Activated naive CD8-positive, alpha-beta T cell treated with anti-CD3 and anti-CD28 coated beads, Interleukin-2, amount 10 ng/mL, durations not matched to agents 7 days and 5 days (primary cell): ENCODE measurements at regions of chr12 and their contacts with region 1.

Region 1: DNA sequence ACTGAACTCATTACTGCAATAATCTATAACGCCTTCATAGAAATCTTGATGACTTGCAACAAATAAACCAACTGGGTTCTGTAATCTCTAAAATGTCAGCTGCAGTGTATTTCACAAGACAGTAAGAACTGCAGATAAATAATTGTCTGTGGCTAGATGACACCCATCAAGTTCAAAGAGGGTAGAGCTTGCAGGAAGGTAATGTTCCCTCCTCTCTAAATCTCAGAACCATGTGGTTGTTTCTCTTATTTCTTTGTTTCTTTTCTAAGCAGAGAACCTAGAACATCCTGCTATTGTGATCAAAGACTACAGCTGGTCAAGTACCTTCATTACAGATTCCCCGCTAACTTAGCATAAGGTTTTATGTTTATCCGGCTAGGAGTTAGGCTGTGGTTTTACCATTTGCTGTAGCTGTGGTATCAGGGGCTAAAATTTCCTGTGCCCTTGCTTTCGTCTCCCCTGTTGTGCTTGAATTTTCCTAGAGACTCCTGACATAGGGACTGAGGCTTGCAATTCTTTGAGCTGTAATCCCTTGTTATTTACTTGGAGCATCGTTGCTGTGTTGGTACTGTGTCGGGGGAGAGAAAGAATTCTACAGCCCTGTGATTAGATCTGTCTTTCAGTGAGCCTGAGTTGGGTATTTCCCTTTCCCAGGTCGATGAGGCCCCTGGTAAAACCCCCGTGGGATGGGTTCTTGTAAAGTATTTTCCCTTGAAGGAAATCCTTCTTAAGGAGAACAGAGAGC is 253.1 kb upstream of the BTG1 start:
- DNase-seq: no peak
- ATAC-seq: peak; percentile 90
- H3K4me3 Mint-ChIP-seq: peak overlapping the region; percentile 62
- H3K27ac Mint-ChIP-seq: peak overlapping the region; percentile 86
- H3K4me1 Mint-ChIP-seq: peaks cover 73% of the 10 kb centered on the region
- H3K27me3 Mint-ChIP-seq: no peaks in the 10 kb centered on the region

Region 2: GRCh38 chr12:92363295-92364146 is 35.2 kb before region 1 on chr12:
- POLR2A ChIA-PET with region 1: interaction called, 23 read pairs
- DNase-seq: peak; percentile 58
- ATAC-seq: peak; percentile 75
- H3K4me3 Mint-ChIP-seq: peak overlapping the region; percentile 82
- H3K27ac Mint-ChIP-seq: peak overlapping the region; percentile 87
- H3K4me1 Mint-ChIP-seq: peaks cover 43% of the 10 kb centered on the region
- H3K27me3 Mint-ChIP-seq: no peaks in the 10 kb centered on the region

Region 3: GRCh38 chr12:92759634-92760268 is 361.0 kb after region 1 on chr12:
- POLR2A ChIA-PET with region 1: no interaction called
- DNase-seq: no peak
- ATAC-seq: no peak
- H3K4me3 Mint-ChIP-seq: no peak overlapping the region
- H3K27ac Mint-ChIP-seq: no peak overlapping the region
- H3K4me1 Mint-ChIP-seq: no peaks in the 10 kb centered on the region
- H3K27me3 Mint-ChIP-seq: peaks cover 23% of the 10 kb centered on the region